Ascending aorta (tissue), 2 donors: ENCODE measurements at regions of chr7 and their contacts with region 1.

Region 1: GRCh38 chr7:28926871-28927597 is 31.1 kb downstream of the TRIL start:
- DNase-seq: peak; percentile 33 to 89
- H3K4me3 ChIP-seq: peak overlapping the region; percentile 61 to 65
- H3K27ac ChIP-seq: no peak overlapping the region
- H3K4me1 ChIP-seq: peaks cover 0 to 5% of the 10 kb centered on the region in 2 donors
- H3K27me3 ChIP-seq: no peaks in the 10 kb centered on the region
- CTCF ChIP-seq: peak; percentile 71 to 78 (median 74)

Region 2: DNA sequence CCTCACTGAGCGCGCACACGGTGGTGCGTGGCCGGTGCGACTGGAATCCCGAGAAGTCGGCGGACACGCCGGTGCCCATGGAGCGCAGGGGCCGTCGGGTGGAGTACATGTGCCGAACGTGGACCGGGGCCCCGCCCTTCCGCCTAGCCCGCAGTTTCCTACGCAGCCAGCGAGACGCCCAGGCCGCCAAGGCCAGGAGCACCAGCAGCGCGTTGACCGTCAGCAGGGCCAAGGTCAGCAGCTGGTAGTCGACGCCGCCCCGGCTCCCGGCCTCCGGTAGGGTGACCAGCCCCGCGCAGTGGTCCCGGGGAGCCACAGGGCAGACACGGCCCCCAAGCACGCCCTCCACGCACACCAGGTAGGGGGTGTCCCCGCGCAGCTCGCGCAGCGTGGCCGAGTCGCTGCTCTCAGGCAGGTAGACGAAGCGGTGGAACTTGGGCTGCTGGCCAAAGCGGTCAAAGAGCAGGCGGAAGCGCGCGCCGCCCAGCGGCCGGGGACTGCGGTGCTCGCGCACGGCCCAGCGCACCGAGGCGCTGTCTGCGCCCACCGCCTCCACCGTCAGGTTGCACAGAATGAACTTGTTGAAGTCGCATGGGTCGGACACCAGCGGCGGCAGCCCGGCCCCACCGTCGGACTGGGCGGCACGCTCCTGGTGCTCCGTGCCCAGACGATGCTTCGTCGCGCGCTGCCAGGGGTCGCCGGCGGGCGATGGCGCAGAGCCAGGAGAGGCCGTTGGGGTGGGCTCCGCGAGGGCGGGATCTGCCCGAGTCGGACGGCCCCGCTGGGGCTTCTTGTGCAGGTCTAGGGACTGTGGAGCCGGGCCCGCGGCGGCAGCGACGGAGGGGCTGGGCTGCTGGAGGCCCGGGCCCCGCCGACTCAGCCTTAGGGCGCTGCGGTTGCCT is 28.9 kb after region 1 on chr7:
- intact Hi-C with region 1: loop called (anchors 2 kb)
- DNase-seq: peak in 1 of 2 donors; percentile 76
- H3K4me3 ChIP-seq: peak overlapping the region; percentile 48 to 58
- H3K27ac ChIP-seq: no peak overlapping the region
- H3K4me1 ChIP-seq: peaks cover 6 to 21% of the 10 kb centered on the region in 2 donors
- H3K27me3 ChIP-seq: peaks cover 27% of the 10 kb centered on the region
- CTCF ChIP-seq: peak; percentile 38 to 65 (median 42)

Region 3: GRCh38 chr7:29105752-29106668 is 179.0 kb after region 1 on chr7:
- intact Hi-C with region 1: loop called (anchors 1 kb)
- DNase-seq: no peak
- H3K4me3 ChIP-seq: no peak overlapping the region
- H3K27ac ChIP-seq: no peak overlapping the region
- H3K4me1 ChIP-seq: no peaks in the 10 kb centered on the region
- H3K27me3 ChIP-seq: no peaks in the 10 kb centered on the region
- CTCF ChIP-seq: peak; percentile 56 to 84 (median 56)